GM10248 (cell line): ENCODE measurements at regions of chr9 and their contacts with region 1.

Region 1: GRCh38 chr9:109590945-109591344 is 92.8 kb upstream of the PTPN3 start:
- DNase-seq: no peak
- CTCF ChIP-seq: no peak

Region 2: DNA sequence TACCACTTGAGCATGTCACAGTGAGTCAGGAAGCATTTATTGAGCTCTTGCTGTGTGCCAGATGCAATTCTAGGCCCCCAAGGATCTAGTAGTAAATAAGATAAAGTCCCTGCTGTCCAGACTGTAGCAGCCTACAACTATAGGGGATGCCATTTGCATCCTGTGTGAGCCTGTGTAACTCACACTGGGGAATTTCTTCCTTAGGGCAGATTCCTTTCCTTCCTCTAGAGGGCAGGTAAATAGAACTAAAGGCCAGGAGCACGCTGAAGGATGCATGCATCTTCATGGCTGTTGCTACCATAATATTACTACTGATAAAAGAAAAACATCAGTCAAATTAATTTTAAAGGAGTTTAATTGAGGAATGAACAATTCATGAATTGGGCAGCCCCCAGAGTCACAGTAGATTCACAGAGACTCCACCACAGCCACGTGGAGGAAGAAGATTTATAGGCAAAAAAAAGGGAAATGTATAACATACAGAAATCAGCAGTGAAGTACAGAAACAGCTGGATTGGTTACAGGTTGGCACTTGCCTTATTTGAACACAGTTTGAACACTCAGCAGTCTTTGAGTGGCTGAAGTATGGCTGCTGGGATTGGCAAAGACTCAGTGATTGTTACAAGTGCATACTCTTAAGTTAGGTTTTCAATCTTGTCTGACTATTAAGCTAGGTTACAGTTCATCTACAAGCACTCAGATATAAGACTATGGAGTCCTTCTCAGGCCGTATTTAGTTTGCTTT is 834.0 kb before region 1 on chr9:
- CTCF ChIA-PET with region 1: no interaction called
- POLR2A ChIA-PET with region 1: no interaction called
- DNase-seq: no peak
- CTCF ChIP-seq: no peak

Region 3: GRCh38 chr9:109574068-109574882 is 16.7 kb before region 1 on chr9:
- CTCF ChIA-PET with region 1: interaction called, 11 read pairs
- POLR2A ChIA-PET with region 1: no interaction called
- DNase-seq: peak; percentile 34
- CTCF ChIP-seq: peak; percentile 68

Region 4: DNA sequence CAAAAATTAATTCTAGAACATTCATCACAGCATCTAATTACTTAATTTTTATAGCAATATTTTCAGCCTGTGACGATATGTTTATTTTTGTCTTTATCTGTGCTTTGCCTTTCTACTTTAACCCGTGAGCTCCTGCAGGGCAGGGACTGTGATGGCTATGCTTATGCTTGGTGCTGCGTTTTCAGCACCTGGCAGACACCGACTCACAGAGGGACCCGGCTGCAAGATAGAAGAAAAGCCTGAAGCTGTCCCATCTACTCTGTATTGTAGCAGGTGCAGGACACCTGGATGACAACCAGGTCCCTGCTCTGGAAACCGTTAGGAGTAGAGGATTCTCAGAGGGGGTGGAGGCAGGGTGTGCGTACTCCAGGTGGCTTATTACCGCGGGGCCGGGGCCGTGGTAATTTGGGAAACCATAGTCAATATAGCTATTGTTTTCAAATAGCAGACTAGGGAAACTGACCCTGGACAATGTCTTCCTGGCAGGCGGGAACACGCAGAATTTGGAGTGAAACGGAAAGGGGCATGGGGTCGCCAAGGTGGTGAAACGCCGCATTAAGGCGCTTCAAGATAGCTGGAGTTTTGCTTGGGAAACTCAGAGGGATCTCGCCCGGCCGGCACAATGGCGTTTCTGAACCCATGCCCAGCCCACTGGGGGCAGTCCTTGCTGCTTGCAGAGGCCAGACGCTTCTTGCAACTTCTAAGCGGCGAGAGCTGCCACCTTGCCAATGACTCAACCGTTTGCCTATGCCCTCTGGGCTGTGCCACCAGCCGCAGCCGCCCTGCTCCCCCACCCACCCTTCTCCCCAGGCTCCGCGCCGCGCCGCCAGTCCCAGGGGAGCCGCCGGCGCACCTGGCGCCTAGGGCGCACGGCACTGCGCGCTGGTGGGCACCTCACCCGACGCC is 49.0 kb after region 1 on chr9:
- CTCF ChIA-PET with region 1: no interaction called
- POLR2A ChIA-PET with region 1: no interaction called
- DNase-seq: no peak
- CTCF ChIP-seq: no peak